CD4-positive, alpha-beta T cell (primary cell): ENCODE measurements at regions of chr5 and their contacts with region 1.

Region 1: DNA sequence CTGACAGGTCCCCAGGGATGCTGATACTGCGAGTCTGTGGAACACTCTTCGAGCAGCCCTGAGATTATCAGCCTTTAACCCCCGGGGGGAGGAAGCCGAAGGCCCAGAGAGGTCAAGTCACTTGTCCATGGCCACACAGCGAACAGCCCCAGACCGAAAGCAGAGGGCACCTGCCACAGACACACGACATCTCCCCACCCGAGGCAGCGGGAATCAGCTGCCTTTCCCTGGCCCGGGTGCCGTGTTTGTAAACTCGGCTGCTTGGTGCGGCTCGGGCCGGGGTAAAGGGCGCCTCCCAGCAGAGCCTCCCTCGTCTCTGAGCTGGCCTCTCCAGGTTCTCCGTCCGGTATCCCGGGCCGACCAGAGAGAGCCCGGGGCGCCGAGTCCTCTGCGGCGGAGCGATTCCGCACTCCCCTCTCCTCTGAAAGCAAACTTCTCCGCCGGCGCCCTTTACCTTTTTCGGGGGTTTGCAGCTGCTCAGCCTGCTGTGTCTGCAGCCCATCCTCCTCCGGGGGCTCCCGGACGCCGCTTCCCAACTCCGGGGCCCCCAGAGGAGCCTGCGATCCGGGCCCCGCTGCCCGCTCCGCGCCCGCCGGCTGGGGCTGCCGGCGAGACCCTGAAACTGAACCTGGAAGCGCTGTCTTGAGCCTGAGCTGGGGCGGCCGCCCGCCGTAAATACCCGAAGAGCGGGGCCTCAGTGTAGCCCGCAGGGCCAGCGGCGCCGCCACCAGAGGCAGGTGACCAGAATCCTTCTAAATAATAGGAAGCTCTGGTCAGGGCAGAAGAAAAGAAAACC is at the start of gene CCDC69:
- DNase-seq: peak in 12 of 14 experiments; percentile 16 to 73 (median 50)
- ATAC-seq: peak; percentile 40
- H3K4me3 ChIP-seq: peak within 1 kb of the TSS; percentile 98
- H3K4me3 Mint-ChIP-seq: peak within 1 kb of the TSS; percentile 92
- H3K27ac ChIP-seq: peak within 1 kb of the TSS; percentile 92 to 94
- H3K27ac Mint-ChIP-seq: peak within 1 kb of the TSS; percentile 94
- H3K4me1 ChIP-seq: peaks cover 64% of the 10 kb centered on the region
- H3K4me1 Mint-ChIP-seq: peaks cover 63% of the 10 kb centered on the region
- H3K27me3 ChIP-seq: no peaks in the 10 kb centered on the region
- H3K27me3 Mint-ChIP-seq: no peaks in the 10 kb centered on the region
- CTCF ChIP-seq: no peak
- total RNA-seq, gene CCDC69: 68.0 to 68.9 TPM

Region 2: GRCh38 chr5:151126199-151126645 is 97.4 kb before region 1 on chr5:
- CTCF ChIA-PET with region 1: interaction called, 22 read pairs
- POLR2A ChIA-PET with region 1: interaction called, 4 read pairs
- intact Hi-C with region 1: no loop called
- DNase-seq: peak; percentile 42 to 84 (median 62)
- ATAC-seq: peak; percentile 61
- H3K4me3 ChIP-seq: no peak overlapping the region
- H3K4me3 Mint-ChIP-seq: no peak overlapping the region
- H3K27ac ChIP-seq: peak overlapping the region in 1 of 2 donors; percentile 50
- H3K27ac Mint-ChIP-seq: peak overlapping the region; percentile 91
- H3K4me1 ChIP-seq: peaks cover 53% of the 10 kb centered on the region
- H3K4me1 Mint-ChIP-seq: peaks cover 71% of the 10 kb centered on the region
- H3K27me3 ChIP-seq: no peaks in the 10 kb centered on the region
- H3K27me3 Mint-ChIP-seq: no peaks in the 10 kb centered on the region
- CTCF ChIP-seq: peak; percentile 90

Region 3: GRCh38 chr5:151202381-151203139 is 21.1 kb before region 1 on chr5:
- CTCF ChIA-PET with region 1: interaction called, 3 read pairs
- POLR2A ChIA-PET with region 1: interaction called, 17 read pairs
- intact Hi-C with region 1: no loop called
- DNase-seq: peak in 6 of 14 experiments; percentile 4 to 76 (median 58)
- ATAC-seq: peak; percentile 74
- H3K4me3 ChIP-seq: no peak overlapping the region
- H3K4me3 Mint-ChIP-seq: peak overlapping the region; percentile 68
- H3K27ac ChIP-seq: peak overlapping the region; percentile 38 to 49
- H3K27ac Mint-ChIP-seq: peak overlapping the region; percentile 90
- H3K4me1 ChIP-seq: peaks cover 41% of the 10 kb centered on the region
- H3K4me1 Mint-ChIP-seq: peaks cover 56% of the 10 kb centered on the region
- H3K27me3 ChIP-seq: no peaks in the 10 kb centered on the region
- H3K27me3 Mint-ChIP-seq: no peaks in the 10 kb centered on the region
- CTCF ChIP-seq: no peak

Region 4: DNA sequence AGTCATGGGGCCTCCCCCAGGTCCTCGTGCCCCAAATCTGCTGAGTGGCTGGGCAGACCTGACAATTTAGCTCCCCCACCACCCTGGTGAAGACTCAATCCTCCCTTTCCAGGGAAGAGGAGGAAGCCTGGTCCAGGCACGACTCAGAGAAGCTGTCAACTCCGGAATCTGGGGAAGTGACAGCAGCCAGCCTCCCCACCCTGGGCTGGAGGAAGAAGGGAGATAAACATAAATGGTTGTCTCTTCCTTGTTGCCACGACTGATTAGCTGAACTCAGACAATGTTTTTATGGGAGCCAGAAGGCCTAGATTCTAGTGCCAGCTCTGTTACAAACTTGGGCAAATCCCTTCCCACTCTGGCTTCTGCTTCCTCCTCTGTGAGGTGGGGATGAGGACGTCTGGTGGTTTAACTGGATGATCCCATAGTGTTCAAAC is 15.2 kb before region 1 on chr5:
- CTCF ChIA-PET with region 1: interaction called, 33 read pairs
- POLR2A ChIA-PET with region 1: interaction called, 223 read pairs
- intact Hi-C with region 1: no loop called
- DNase-seq: peak in 2 of 14 experiments; percentile 24 to 35
- ATAC-seq: no peak
- H3K4me3 ChIP-seq: no peak overlapping the region
- H3K4me3 Mint-ChIP-seq: peak overlapping the region; percentile 48
- H3K27ac ChIP-seq: peak overlapping the region; percentile 6 to 18
- H3K27ac Mint-ChIP-seq: peak overlapping the region; percentile 82
- H3K4me1 ChIP-seq: peaks cover 80% of the 10 kb centered on the region
- H3K4me1 Mint-ChIP-seq: peaks cover 78% of the 10 kb centered on the region
- H3K27me3 ChIP-seq: no peaks in the 10 kb centered on the region
- H3K27me3 Mint-ChIP-seq: no peaks in the 10 kb centered on the region
- CTCF ChIP-seq: no peak

Region 5: DNA sequence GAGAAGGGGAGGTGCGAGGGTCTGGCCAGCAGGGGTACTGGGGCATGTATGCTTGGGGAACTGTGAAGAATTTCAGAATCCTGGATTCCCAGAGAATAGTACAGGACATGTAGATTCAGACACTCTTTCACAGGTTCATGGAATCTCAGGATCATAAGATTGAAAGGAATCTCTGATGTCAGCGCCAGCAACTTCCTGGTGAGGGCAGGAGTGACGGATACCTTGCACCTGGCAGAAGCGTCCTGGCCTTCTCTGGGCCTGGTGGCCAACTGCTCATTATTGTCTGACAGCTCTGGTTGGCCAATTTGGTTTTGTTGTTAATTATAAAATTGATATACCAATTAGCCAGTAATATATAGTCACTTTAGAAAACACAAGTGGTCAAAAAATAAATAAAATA is 36.3 kb after region 1 on chr5:
- CTCF ChIA-PET with region 1: no interaction called
- POLR2A ChIA-PET with region 1: no interaction called
- intact Hi-C with region 1: no loop called
- DNase-seq: no peak
- ATAC-seq: no peak
- H3K4me3 ChIP-seq: no peak overlapping the region
- H3K4me3 Mint-ChIP-seq: no peak overlapping the region
- H3K27ac ChIP-seq: no peak overlapping the region
- H3K27ac Mint-ChIP-seq: no peak overlapping the region
- H3K4me1 ChIP-seq: peaks cover 5% of the 10 kb centered on the region
- H3K4me1 Mint-ChIP-seq: peaks cover 17% of the 10 kb centered on the region
- H3K27me3 ChIP-seq: no peaks in the 10 kb centered on the region
- H3K27me3 Mint-ChIP-seq: no peaks in the 10 kb centered on the region
- CTCF ChIP-seq: no peak